T-cell (primary cell): ENCODE measurements at regions of chr3 and their contacts with region 1.

Region 1: DNA sequence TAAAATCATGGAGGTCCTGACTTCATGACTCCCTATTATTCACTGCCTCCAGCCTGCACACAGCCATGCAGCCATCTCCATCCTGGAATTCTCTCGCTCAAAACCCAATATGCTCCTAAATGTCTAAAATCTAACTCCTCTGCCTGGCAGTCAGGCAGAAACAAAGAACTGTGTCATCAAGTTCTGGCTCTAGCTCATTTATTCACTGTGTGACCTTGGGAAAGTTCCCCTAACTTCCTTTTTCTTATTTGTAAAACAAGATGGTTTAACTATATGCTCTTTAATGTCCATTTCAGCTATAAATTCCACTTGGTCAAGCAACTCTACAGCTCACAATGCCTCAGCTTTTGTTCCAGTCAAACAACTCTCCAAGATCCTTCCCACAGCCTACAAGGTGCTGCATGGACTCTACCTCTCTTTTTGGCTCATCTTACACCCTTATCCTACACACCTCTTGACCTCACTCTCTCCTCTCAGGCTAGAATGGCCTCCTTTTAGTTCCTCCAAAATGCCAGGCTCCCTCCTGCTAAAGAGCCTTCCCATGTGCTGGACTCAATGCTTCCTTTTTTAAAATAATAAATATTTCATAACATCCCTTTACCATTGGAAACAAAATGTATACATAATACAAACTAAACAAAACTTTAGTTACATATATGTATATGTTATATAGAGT is 16.4 kb downstream of the PIK3CB start:
- DNase-seq: no peak
- ATAC-seq: no peak
- H3K4me3 ChIP-seq: no peak overlapping the region
- H3K4me3 Mint-ChIP-seq: no peak overlapping the region
- H3K27ac ChIP-seq: no peak overlapping the region
- H3K27ac Mint-ChIP-seq: peak overlapping the region; percentile 45 to 70
- H3K4me1 ChIP-seq: peaks cover 10 to 15% of the 10 kb centered on the region in 2 experiments
- H3K4me1 Mint-ChIP-seq: peaks cover 46 to 52% (median 49%) of the 10 kb centered on the region in 3 donors
- H3K27me3 ChIP-seq: no peaks in the 10 kb centered on the region
- H3K27me3 Mint-ChIP-seq: no peaks in the 10 kb centered on the region

Region 2: GRCh38 chr3:138747225-138747624 is 71.1 kb before region 1 on chr3:
- CTCF ChIA-PET with region 1: no interaction called
- POLR2A ChIA-PET with region 1: interaction called in 1 of 2 experiments, 11 read pairs
- DNase-seq: no peak
- ATAC-seq: no peak
- H3K4me3 ChIP-seq: no peak overlapping the region
- H3K4me3 Mint-ChIP-seq: no peak overlapping the region
- H3K27ac ChIP-seq: no peak overlapping the region
- H3K27ac Mint-ChIP-seq: no peak overlapping the region
- H3K4me1 ChIP-seq: no peaks in the 10 kb centered on the region
- H3K4me1 Mint-ChIP-seq: peaks cover 0 to 12% (median 0%) of the 10 kb centered on the region in 3 donors
- H3K27me3 ChIP-seq: no peaks in the 10 kb centered on the region
- H3K27me3 Mint-ChIP-seq: no peaks in the 10 kb centered on the region

Region 3: GRCh38 chr3:139198929-139199328 is 380.6 kb after region 1 on chr3:
- CTCF ChIA-PET with region 1: no interaction called
- POLR2A ChIA-PET with region 1: no interaction called
- DNase-seq: no peak
- ATAC-seq: no peak
- H3K4me3 ChIP-seq: no peak overlapping the region
- H3K4me3 Mint-ChIP-seq: no peak overlapping the region
- H3K27ac ChIP-seq: no peak overlapping the region
- H3K27ac Mint-ChIP-seq: no peak overlapping the region
- H3K4me1 ChIP-seq: no peaks in the 10 kb centered on the region
- H3K4me1 Mint-ChIP-seq: no peaks in the 10 kb centered on the region
- H3K27me3 ChIP-seq: peaks cover 0 to 8% of the 10 kb centered on the region in 2 experiments
- H3K27me3 Mint-ChIP-seq: peaks cover 0 to 9% of the 10 kb centered on the region in 2 donors